GM23248 (cell line): ENCODE measurements at regions of chr10 and their contacts with region 1.

Region 1: GRCh38 chr10:132458593-132459300 is 61.7 kb downstream of the PWWP2B start:
- DNase-seq: peak; percentile 55
- H3K4me3 ChIP-seq: no peak overlapping the region
- H3K27ac ChIP-seq: no peak overlapping the region
- H3K4me1 ChIP-seq: no peaks in the 10 kb centered on the region
- H3K27me3 ChIP-seq: no peaks in the 10 kb centered on the region

Region 2: DNA sequence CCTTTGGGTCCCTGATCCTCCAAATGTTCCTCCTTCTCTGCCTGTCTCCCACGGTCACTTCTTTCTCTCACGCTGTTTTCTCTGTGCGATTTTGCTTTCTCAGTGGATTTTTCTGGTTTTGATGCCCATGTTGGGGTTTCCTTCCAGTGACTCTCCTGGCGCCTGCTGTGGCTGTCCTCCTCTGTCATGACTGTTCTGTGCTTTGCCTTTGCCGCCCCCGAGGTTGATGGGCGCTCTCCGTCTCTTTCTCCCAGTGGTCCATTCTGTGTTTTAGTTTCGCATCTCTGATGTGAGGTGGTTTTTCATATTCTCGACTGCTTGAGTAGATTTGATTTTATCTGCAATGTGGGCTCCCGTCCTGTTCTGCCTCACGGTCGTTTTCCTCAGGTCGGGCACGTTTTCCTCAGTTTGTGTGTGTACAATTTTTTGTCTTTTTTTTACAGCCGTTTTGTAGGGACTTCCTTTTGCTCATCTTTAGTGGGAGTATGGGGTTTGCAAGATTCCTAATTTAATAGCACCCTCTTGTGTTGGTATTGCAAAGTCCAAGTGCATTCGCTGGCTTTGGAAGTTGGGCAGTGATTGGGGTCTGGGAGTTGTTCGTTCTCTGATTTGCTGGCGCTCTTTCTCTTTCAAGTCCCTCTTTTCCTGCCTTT is 178.9 kb after region 1 on chr10:
- in situ Hi-C with region 1: loop called (anchors 5 kb)
- DNase-seq: peak; percentile 76
- H3K4me3 ChIP-seq: peak overlapping the region; percentile 51
- H3K27ac ChIP-seq: no peak overlapping the region
- H3K4me1 ChIP-seq: peaks cover 14% of the 10 kb centered on the region
- H3K27me3 ChIP-seq: no peaks in the 10 kb centered on the region